ENCODE measurements at regions of chr14 and their contacts with region 1.

Region 1: GRCh38 chr14:74913986-74914573 is 9.0 kb downstream of the RPS6KL1 start:
- DNase-seq: peak in 2 of 4 experiments; percentile 47 to 64
- ATAC-seq: peak; percentile 89
- H3K4me3 ChIP-seq: no peak overlapping the region
- H3K27ac ChIP-seq: no peak overlapping the region
- H3K4me1 ChIP-seq: peaks cover 2 to 22% of the 10 kb centered on the region in 2 experiments; a peak in 2 of 5 replicates
- H3K27me3 ChIP-seq: no peaks in the 10 kb centered on the region
- CTCF ChIP-seq: peak; percentile 68 to 72 (median 69)
- EP300 ChIP-seq: no peak
- POLR2A ChIP-seq: no peak
- RAD21 ChIP-seq: peak; percentile 55 to 82

Region 2: GRCh38 chr14:75069811-75070782 is 156.0 kb after region 1 on chr14:
- CTCF ChIA-PET with region 1: no interaction called
- POLR2A ChIA-PET with region 1: no interaction called
- in situ Hi-C with region 1: loop called (anchors 10 kb)
- intact Hi-C with region 1: no loop called
- DNase-seq: peak; percentile 25 to 81 (median 42)
- ATAC-seq: peak; percentile 59
- H3K4me3 ChIP-seq: peak overlapping the region; percentile 41
- H3K27ac ChIP-seq: peak overlapping the region; percentile 93
- H3K4me1 ChIP-seq: peaks cover 26 to 32% of the 10 kb centered on the region in 2 experiments; a peak in 4 of 5 replicates
- H3K27me3 ChIP-seq: no peaks in the 10 kb centered on the region
- CTCF ChIP-seq: no peak
- EP300 ChIP-seq: peak; percentile 37; the same call in 1 of the 2 replicates
- POLR2A ChIP-seq: peak; percentile 55
- RAD21 ChIP-seq: no peak

Region 3: DNA sequence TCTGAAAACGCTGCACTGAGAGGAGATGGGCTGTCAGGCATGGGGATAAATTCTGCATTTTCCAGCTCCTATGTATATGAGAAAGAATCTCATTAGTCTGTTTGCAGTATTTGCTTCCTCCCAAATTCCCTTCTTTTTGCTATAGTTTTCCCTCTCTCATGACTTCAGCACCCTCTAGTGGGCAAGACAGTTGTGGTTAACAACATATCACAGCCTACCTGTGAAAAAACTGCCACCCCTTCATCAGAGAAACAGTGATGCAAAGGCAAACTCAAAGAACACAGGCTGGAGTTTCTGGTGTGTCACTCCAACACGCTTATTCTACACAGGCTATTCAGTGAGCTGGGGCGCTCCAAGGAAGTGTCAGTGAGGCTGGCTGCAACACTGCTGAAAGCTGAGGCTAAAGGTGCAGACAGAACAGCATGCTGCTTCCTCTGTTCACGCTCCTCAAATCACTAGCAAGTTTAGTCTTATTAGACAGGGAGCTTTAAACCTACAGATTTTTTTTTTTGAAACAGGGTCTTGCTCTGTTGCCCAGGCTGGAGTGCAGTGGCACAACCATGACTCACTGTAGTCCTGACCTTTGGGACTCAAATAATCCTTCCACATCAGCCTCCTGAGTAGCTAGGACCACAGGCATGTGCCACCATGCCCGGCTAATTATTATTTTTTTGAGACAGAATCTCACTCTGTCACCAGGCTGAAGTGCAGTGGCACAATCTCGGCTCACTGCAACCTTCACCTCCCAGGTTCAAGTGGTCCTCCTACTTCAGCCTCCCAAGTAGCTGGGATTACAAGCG is 174.7 kb after region 1 on chr14:
- CTCF ChIA-PET with region 1: interaction called, 23 read pairs
- POLR2A ChIA-PET with region 1: no interaction called
- in situ Hi-C with region 1: no loop called
- intact Hi-C with region 1: loop called (anchors 1 kb)
- DNase-seq: peak; percentile 33 to 63 (median 37)
- ATAC-seq: peak; percentile 85
- H3K4me3 ChIP-seq: no peak overlapping the region
- H3K27ac ChIP-seq: no peak overlapping the region
- H3K4me1 ChIP-seq: no peaks in the 10 kb centered on the region
- H3K27me3 ChIP-seq: no peaks in the 10 kb centered on the region
- CTCF ChIP-seq: peak; percentile 61 to 84 (median 70)
- EP300 ChIP-seq: no peak
- POLR2A ChIP-seq: no peak
- RAD21 ChIP-seq: peak; percentile 74 to 90

Region 4: GRCh38 chr14:75482366-75482765 is 568.3 kb after region 1 on chr14:
- CTCF ChIA-PET with region 1: no interaction called
- POLR2A ChIA-PET with region 1: no interaction called
- in situ Hi-C with region 1: no loop called
- intact Hi-C with region 1: no loop called
- DNase-seq: no peak
- ATAC-seq: no peak
- H3K4me3 ChIP-seq: no peak overlapping the region
- H3K27ac ChIP-seq: no peak overlapping the region
- H3K4me1 ChIP-seq: peaks cover 5 to 8% of the 10 kb centered on the region in 2 experiments; a peak in 3 of 5 replicates
- H3K27me3 ChIP-seq: peaks cover 0 to 17% of the 10 kb centered on the region in 2 experiments; a peak in 3 of 5 replicates
- CTCF ChIP-seq: no peak
- EP300 ChIP-seq: no peak
- POLR2A ChIP-seq: no peak
- RAD21 ChIP-seq: no peak

Measured in K562 (cell line).